Activated CD4-positive, alpha-beta T cell treated with anti-CD3 and anti-CD28 coated beads for 36 hours (primary cell): ENCODE measurements at regions of chr12 and their contacts with region 1.

Region 1: GRCh38 chr12:56987551-56988053 is 18.7 kb downstream of the ZBTB39 start:
- DNase-seq: peak; percentile 87
- ATAC-seq: peak; percentile 76
- H3K4me3 Mint-ChIP-seq: no peak overlapping the region
- H3K27ac Mint-ChIP-seq: no peak overlapping the region
- H3K4me1 Mint-ChIP-seq: peaks cover 11% of the 10 kb centered on the region
- H3K27me3 Mint-ChIP-seq: no peaks in the 10 kb centered on the region

Region 2: GRCh38 chr12:56759263-56759908 is 228.2 kb before region 1 on chr12:
- CTCF ChIA-PET with region 1: interaction called, 82 read pairs
- POLR2A ChIA-PET with region 1: no interaction called
- intact Hi-C with region 1: loop called (anchors 1 kb)
- DNase-seq: no peak
- ATAC-seq: no peak
- H3K4me3 Mint-ChIP-seq: no peak overlapping the region
- H3K27ac Mint-ChIP-seq: no peak overlapping the region
- H3K4me1 Mint-ChIP-seq: peaks cover 10% of the 10 kb centered on the region
- H3K27me3 Mint-ChIP-seq: no peaks in the 10 kb centered on the region

Region 3: GRCh38 chr12:56839915-56840325 is 147.7 kb before region 1 on chr12:
- CTCF ChIA-PET with region 1: interaction called, 9 read pairs
- POLR2A ChIA-PET with region 1: no interaction called
- intact Hi-C with region 1: loop called (anchors 1 kb)
- DNase-seq: peak; percentile 66
- ATAC-seq: no peak
- H3K4me3 Mint-ChIP-seq: no peak overlapping the region
- H3K27ac Mint-ChIP-seq: no peak overlapping the region
- H3K4me1 Mint-ChIP-seq: peaks cover 16% of the 10 kb centered on the region
- H3K27me3 Mint-ChIP-seq: no peaks in the 10 kb centered on the region

Region 4: GRCh38 chr12:57196439-57196838 is 208.8 kb after region 1 on chr12:
- CTCF ChIA-PET with region 1: no interaction called
- POLR2A ChIA-PET with region 1: no interaction called
- intact Hi-C with region 1: no loop called
- DNase-seq: no peak
- ATAC-seq: no peak
- H3K4me3 Mint-ChIP-seq: no peak overlapping the region
- H3K27ac Mint-ChIP-seq: no peak overlapping the region
- H3K4me1 Mint-ChIP-seq: no peaks in the 10 kb centered on the region
- H3K27me3 Mint-ChIP-seq: no peaks in the 10 kb centered on the region

Region 5: GRCh38 chr12:57342207-57342691 is 354.6 kb after region 1 on chr12:
- CTCF ChIA-PET with region 1: no interaction called
- POLR2A ChIA-PET with region 1: no interaction called
- intact Hi-C with region 1: no loop called
- DNase-seq: peak; percentile 24
- ATAC-seq: peak; percentile 69
- H3K4me3 Mint-ChIP-seq: no peak overlapping the region
- H3K27ac Mint-ChIP-seq: peak overlapping the region; percentile 17
- H3K4me1 Mint-ChIP-seq: peaks cover 35% of the 10 kb centered on the region
- H3K27me3 Mint-ChIP-seq: no peaks in the 10 kb centered on the region